ENCODE measurements at regions of chr1 and their contacts with region 1.

Region 1: DNA sequence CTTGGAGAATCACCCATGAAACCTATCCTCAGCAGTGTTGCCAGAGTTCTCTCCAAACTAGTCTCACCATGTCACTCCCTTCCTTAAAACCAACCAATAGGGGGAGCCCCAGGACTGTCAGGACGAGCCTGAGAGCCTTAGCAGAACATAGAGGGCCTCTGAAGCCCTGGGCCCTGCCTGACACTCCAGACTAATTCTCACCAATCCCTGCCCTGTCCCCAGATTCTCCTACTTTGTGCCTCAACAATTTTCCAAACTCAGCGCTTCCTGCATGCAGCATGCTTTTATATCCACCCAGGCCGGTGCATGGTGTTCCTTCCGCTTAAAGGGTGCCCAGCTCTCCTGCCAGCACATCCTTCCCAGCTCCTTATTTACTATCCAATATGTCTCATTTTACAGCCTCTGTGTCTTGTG is 42.7 kb downstream of the HSD3B1 start:
- H3K4me3 Mint-ChIP-seq: no peak overlapping the region
- H3K27ac Mint-ChIP-seq: peak overlapping the region; percentile 28
- H3K4me1 Mint-ChIP-seq: peaks cover 11% of the 10 kb centered on the region
- H3K27me3 Mint-ChIP-seq: no peaks in the 10 kb centered on the region

Region 2: GRCh38 chr1:119336848-119337247 is 212.9 kb before region 1 on chr1:
- intact Hi-C with region 1: no loop called
- H3K4me3 Mint-ChIP-seq: no peak overlapping the region
- H3K27ac Mint-ChIP-seq: no peak overlapping the region
- H3K4me1 Mint-ChIP-seq: no peaks in the 10 kb centered on the region
- H3K27me3 Mint-ChIP-seq: no peaks in the 10 kb centered on the region

Region 3: DNA sequence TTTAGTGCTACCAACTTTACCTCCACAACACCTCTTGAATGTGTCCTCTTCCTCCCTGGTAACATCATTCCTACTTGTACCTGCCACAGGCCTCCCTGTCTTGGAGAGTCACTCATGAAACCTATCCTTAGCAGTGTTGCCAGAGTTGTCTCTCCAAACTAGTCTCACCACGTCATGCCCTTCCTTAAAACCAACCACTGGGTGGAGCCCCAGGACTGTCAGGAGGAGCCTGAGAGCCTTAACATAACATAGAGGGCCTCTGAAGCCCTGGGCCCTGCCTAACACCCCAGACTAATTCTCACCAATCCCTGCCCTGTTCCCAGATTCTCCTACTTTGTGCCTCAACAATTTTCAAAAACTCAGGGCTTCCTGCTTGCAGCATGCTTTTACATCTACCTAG is 33.1 kb after region 1 on chr1:
- intact Hi-C with region 1: loop called (anchors 5 kb)
- H3K4me3 Mint-ChIP-seq: no peak overlapping the region
- H3K27ac Mint-ChIP-seq: peak overlapping the region; percentile 4
- H3K4me1 Mint-ChIP-seq: peaks cover 63% of the 10 kb centered on the region
- H3K27me3 Mint-ChIP-seq: no peaks in the 10 kb centered on the region

Region 4: GRCh38 chr1:119613769-119614720 is 64.3 kb after region 1 on chr1:
- intact Hi-C with region 1: loop called (anchors 2 kb)
- H3K4me3 Mint-ChIP-seq: no peak overlapping the region
- H3K27ac Mint-ChIP-seq: no peak overlapping the region
- H3K4me1 Mint-ChIP-seq: peaks cover 43% of the 10 kb centered on the region
- H3K27me3 Mint-ChIP-seq: no peaks in the 10 kb centered on the region

Region 5: DNA sequence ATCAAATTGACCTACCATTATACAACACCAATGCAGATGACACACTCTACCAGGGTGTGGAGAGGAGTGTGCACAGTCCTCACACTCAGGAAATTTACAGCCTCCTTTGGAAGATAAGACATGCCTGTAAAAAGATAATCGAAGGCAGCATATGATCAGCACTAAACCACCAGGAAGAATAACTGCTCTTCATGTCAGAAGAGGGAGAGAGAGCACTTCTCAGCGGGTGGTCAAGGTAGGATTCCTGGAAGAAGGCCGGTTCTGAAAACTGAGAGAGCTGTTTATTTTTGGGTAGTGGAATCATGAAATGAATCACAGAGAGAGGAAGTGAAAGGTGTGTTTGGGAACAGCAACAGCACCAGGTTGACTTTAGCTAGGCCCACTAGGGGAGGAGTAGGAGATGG is 112.3 kb after region 1 on chr1:
- intact Hi-C with region 1: loop called (anchors 1 kb)
- H3K4me3 Mint-ChIP-seq: no peak overlapping the region
- H3K27ac Mint-ChIP-seq: no peak overlapping the region
- H3K4me1 Mint-ChIP-seq: peaks cover 6% of the 10 kb centered on the region
- H3K27me3 Mint-ChIP-seq: peaks cover 12% of the 10 kb centered on the region

Region 6: GRCh38 chr1:119675349-119676345 is 125.9 kb after region 1 on chr1:
- intact Hi-C with region 1: loop called (anchors 2 kb)
- H3K4me3 Mint-ChIP-seq: peak overlapping the region; percentile 61
- H3K27ac Mint-ChIP-seq: no peak overlapping the region
- H3K4me1 Mint-ChIP-seq: peaks cover 5% of the 10 kb centered on the region
- H3K27me3 Mint-ChIP-seq: peaks cover 7% of the 10 kb centered on the region